ENCODE measurements at regions of chr15 and their contacts with region 1.

Region 1: GRCh38 chr15:72671535-72671934 is 14.4 kb downstream of the HIGD2B start:
- DNase-seq: no peak
- ATAC-seq: no peak
- H3K4me3 ChIP-seq: no peak overlapping the region
- H3K27ac ChIP-seq: peak overlapping the region; percentile 3; the same call in 1 of the 2 replicates
- H3K4me1 ChIP-seq: peaks cover 7 to 9% of the 10 kb centered on the region in 2 experiments; a peak in 3 of 4 replicates
- H3K27me3 ChIP-seq: no peaks in the 10 kb centered on the region
- CTCF ChIP-seq: no peak
- POLR2A ChIP-seq: no peak
- RAD21 ChIP-seq: no peak

Region 2: DNA sequence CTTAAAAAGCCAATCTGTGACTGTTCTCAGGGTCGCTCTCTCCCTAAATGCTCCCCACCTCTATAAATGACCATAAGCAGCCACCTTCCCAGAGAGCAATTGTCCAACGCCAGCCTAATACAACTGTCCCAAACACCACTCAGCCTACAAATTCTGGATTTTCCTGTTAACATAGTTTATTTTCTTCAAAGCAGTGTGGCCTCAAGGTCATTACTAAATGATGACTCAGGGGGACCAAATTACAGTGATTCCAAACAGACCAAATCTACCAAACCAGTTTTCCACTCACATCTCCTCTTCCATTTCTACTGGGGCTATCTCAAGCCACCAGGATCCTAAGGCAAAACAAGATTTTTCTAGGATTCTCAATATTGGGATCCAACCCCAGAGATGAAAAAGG is 318.3 kb before region 1 on chr15:
- CTCF ChIA-PET with region 1: no interaction called
- POLR2A ChIA-PET with region 1: no interaction called
- RAD21 ChIA-PET with region 1: no interaction called
- intact Hi-C with region 1: no loop called
- DNase-seq: no peak
- ATAC-seq: no peak
- H3K4me3 ChIP-seq: no peak overlapping the region
- H3K27ac ChIP-seq: no peak overlapping the region
- H3K4me1 ChIP-seq: no peaks in the 10 kb centered on the region; a peak in 1 of 4 replicates
- H3K27me3 ChIP-seq: no peaks in the 10 kb centered on the region
- CTCF ChIP-seq: no peak
- POLR2A ChIP-seq: no peak
- RAD21 ChIP-seq: no peak

Region 3: GRCh38 chr15:72685925-72686794 is 14.6 kb after region 1 on chr15 and contains the starts of genes BBS4 and HIGD2B:
- CTCF ChIA-PET with region 1: interaction called, 12 read pairs
- POLR2A ChIA-PET with region 1: interaction called, 4 read pairs
- RAD21 ChIA-PET with region 1: no interaction called
- intact Hi-C with region 1: no loop called
- DNase-seq: peak; percentile 90
- ATAC-seq: peak; percentile 93
- H3K4me3 ChIP-seq: peak within 1 kb of the TSS; percentile 64 to 75
- H3K27ac ChIP-seq: peak within 1 kb of the TSS; percentile 87
- H3K4me1 ChIP-seq: peaks cover 8 to 10% of the 10 kb centered on the region in 2 experiments; a peak in 3 of 4 replicates
- H3K27me3 ChIP-seq: no peaks in the 10 kb centered on the region
- CTCF ChIP-seq: no peak
- POLR2A ChIP-seq: peak; percentile 86
- RAD21 ChIP-seq: no peak
- total RNA-seq, gene BBS4: 10.0 TPM
- total RNA-seq, gene HIGD2B: 0.27 TPM

Measured in HCT116 (cell line).